Activated B cell treated with CpG ODN at 0.5 μM for 24 hours (primary cell): ENCODE measurements at regions of chr19 and their contacts with region 1.

Region 1: GRCh38 chr19:49624967-49625910 is 14.7 kb downstream of the RRAS start:
- DNase-seq: no peak
- ATAC-seq: no peak
- H3K4me3 Mint-ChIP-seq: no peak overlapping the region
- H3K27ac Mint-ChIP-seq: no peak overlapping the region
- H3K4me1 Mint-ChIP-seq: no peaks in the 10 kb centered on the region
- H3K27me3 Mint-ChIP-seq: no peaks in the 10 kb centered on the region
- CTCF ChIP-seq: no peak

Region 2: DNA sequence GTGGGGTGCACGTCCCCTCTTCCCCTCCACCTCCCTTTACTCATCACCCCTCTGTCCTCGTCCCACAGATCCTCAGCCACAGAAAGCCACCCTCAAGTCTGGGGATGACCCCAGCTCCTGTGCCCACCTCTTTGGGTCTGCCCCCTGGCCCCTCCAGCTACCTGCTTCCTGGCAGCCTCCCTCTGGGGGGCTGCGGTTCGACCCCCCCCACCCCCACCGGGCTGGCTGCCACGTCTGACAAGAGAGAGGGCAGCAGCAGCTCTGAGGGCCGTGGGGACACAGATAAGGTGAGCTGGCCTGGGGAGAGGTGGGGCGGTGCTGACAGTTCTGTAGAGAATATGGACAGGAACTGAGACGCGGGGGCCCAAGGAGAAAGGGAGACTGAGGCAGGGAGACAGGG is 29.3 kb after region 1 on chr19:
- CTCF ChIA-PET with region 1: no interaction called
- POLR2A ChIA-PET with region 1: interaction called, 11 read pairs
- intact Hi-C with region 1: no loop called
- DNase-seq: no peak
- ATAC-seq: no peak
- H3K4me3 Mint-ChIP-seq: no peak overlapping the region
- H3K27ac Mint-ChIP-seq: no peak overlapping the region
- H3K4me1 Mint-ChIP-seq: no peaks in the 10 kb centered on the region
- H3K27me3 Mint-ChIP-seq: no peaks in the 10 kb centered on the region
- CTCF ChIP-seq: no peak

Region 3: GRCh38 chr19:49727217-49728030 is 102.2 kb after region 1 on chr19:
- CTCF ChIA-PET with region 1: no interaction called
- POLR2A ChIA-PET with region 1: no interaction called
- intact Hi-C with region 1: no loop called
- DNase-seq: no peak
- ATAC-seq: no peak
- H3K4me3 Mint-ChIP-seq: no peak overlapping the region
- H3K27ac Mint-ChIP-seq: no peak overlapping the region
- H3K4me1 Mint-ChIP-seq: no peaks in the 10 kb centered on the region
- H3K27me3 Mint-ChIP-seq: peaks cover 3% of the 10 kb centered on the region
- CTCF ChIP-seq: no peak

Region 4: DNA sequence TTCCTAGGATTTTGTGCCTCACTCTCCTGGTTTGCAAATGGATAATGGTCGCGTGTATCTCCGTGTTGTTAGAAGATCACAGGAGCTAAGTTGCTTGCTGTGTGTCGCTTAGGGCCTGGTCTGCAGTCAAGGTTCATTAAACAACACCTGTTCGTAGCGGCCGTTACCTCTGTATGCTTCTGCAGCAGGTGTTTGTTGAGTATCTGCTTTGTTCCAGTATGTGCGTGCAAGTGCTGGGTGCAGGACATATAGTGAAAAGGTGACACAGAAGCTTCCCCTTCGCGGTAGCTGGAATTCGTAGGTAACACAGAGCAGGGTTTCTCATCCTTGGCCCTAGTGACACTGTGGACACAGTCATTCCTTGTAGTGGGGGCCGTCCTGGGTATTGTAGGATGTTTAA is 198.2 kb after region 1 on chr19:
- CTCF ChIA-PET with region 1: no interaction called
- POLR2A ChIA-PET with region 1: no interaction called
- intact Hi-C with region 1: no loop called
- DNase-seq: no peak
- ATAC-seq: no peak
- H3K4me3 Mint-ChIP-seq: no peak overlapping the region
- H3K27ac Mint-ChIP-seq: no peak overlapping the region
- H3K4me1 Mint-ChIP-seq: peaks cover 29% of the 10 kb centered on the region
- H3K27me3 Mint-ChIP-seq: no peaks in the 10 kb centered on the region
- CTCF ChIP-seq: no peak